ENCODE measurements at regions of chr15 and their contacts with region 1.

Region 1: GRCh38 chr15:43776718-43777583 is at the start of gene ELL3:
- DNase-seq: peak; percentile 95
- H3K4me3 Mint-ChIP-seq: peak within 1 kb of the TSS; percentile 89
- H3K27ac Mint-ChIP-seq: peak within 1 kb of the TSS; percentile 84
- H3K4me1 Mint-ChIP-seq: peaks cover 23% of the 10 kb centered on the region
- H3K27me3 Mint-ChIP-seq: no peaks in the 10 kb centered on the region
- total RNA-seq, gene ELL3: 1.0 to 1.2 TPM

Region 2: GRCh38 chr15:43440721-43441281 is 336.1 kb before region 1 on chr15:
- CTCF ChIA-PET with region 1: interaction called, 3 read pairs
- intact Hi-C with region 1: loop called (anchors 2 kb)
- DNase-seq: peak; percentile 68
- H3K4me3 Mint-ChIP-seq: no peak overlapping the region
- H3K27ac Mint-ChIP-seq: peak overlapping the region; percentile 86
- H3K4me1 Mint-ChIP-seq: peaks cover 7% of the 10 kb centered on the region
- H3K27me3 Mint-ChIP-seq: no peaks in the 10 kb centered on the region

Region 3: GRCh38 chr15:43791993-43792760 is 15.2 kb after region 1 on chr15 and contains the start of gene SERF2:
- CTCF ChIA-PET with region 1: interaction called, 17 read pairs
- intact Hi-C with region 1: loop called (anchors 1 kb)
- DNase-seq: peak; percentile 100
- H3K4me3 Mint-ChIP-seq: peak within 1 kb of the TSS; percentile 90
- H3K27ac Mint-ChIP-seq: peak within 1 kb of the TSS; percentile 92
- H3K4me1 Mint-ChIP-seq: peaks cover 39% of the 10 kb centered on the region
- H3K27me3 Mint-ChIP-seq: no peaks in the 10 kb centered on the region
- total RNA-seq, gene SERF2: 781 to 808 TPM

Region 4: DNA sequence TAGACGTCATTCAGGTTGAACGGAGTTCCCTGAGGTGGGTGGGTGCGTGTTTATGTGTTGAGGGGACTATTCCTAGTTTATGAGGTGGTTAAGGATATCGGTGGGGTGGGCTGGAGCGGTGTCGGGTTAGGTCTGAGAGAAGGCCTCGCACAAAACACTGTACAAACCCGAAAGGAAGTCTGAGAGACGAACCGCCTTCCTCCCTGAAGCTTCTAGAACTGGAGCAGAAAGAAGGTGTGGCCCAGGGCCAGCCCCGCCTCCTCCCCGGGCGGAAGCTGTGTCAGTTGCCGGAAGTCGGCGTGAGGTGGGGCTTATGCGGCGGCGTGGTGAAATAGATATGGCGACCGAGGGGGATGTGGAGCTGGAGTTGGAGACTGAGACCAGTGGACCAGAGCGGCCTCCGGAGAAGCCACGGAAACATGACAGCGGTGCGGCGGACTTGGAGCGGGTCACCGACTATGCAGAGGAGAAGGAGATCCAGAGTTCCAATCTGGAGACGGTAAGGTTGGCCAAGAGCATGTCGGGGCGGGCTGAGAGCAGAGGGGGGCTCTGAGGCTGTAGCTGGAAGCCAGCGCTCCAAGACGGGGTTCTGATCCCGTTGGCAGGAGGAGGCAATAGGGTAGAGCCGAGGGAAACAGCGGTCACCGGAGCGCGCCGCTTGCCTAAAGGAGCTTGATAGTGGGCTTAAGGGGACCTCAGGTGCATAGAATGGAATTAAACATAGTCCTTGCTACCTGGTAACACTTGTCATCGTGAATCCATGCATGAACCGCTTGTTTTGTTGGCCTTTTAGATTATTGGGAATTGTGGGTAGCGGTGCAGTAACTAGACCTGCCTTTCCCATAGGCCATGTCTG is 23.6 kb after region 1 on chr15 and contains the start of gene HYPK:
- CTCF ChIA-PET with region 1: interaction called, 17 read pairs
- intact Hi-C with region 1: loop called (anchors 1 kb)
- DNase-seq: peak; percentile 94
- H3K4me3 Mint-ChIP-seq: peak within 1 kb of the TSS; percentile 97
- H3K27ac Mint-ChIP-seq: peak within 1 kb of the TSS; percentile 95
- H3K4me1 Mint-ChIP-seq: peaks cover 43% of the 10 kb centered on the region
- H3K27me3 Mint-ChIP-seq: no peaks in the 10 kb centered on the region
- total RNA-seq, gene HYPK: 19.6 to 21.1 TPM

Region 5: DNA sequence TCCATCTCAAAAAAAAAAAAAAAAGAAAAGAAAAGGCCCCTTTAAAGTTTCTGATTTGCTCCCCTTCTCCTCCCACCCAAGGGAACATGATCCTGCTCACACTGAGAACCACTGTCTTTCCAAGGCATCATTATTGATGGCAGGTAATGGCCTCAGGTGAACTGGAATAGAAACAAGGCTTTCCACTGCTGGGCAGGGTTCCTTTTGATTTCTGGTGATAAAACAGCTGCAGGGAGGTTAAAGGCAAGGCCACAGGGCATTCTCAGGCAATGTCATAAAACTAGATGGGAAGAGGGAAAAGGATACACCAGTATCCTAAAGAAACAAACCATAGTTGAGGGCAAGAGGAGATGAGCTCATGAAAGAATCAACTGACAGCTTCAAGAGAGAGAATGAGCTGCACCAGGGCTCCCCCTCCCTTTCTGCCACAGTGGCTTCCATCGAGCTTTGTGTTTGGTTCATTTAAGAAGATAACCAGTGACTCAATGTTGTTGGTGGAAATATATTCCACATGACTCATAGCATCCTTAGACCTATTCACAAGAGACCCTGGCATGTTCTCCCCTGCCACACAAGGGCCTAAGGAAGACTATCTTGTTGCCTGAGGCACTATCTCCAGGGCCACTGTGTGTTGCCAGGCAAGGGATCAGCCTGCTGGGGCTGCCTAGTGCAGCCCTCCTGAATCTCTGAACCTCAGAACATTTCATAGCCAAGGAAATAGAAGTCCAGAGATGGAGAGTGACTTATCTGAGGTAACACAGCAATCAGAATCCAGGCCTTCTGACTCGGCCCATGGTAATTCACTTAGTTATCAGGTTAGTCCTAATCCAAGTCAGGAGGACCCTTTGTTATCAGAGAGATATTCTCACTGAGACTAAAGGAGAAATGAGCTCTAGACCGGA is 136.3 kb after region 1 on chr15:
- CTCF ChIA-PET with region 1: no interaction called
- intact Hi-C with region 1: no loop called
- DNase-seq: peak; percentile 11
- H3K4me3 Mint-ChIP-seq: no peak overlapping the region
- H3K27ac Mint-ChIP-seq: no peak overlapping the region
- H3K4me1 Mint-ChIP-seq: peaks cover 2% of the 10 kb centered on the region
- H3K27me3 Mint-ChIP-seq: no peaks in the 10 kb centered on the region

Measured in activated naive CD4-positive, alpha-beta T cell treated with anti-CD3 and anti-CD28 coated beads for 36 hours (primary cell).